GM12878 (cell line): ENCODE measurements at regions of chr3 and their contacts with region 1.

Region 1: DNA sequence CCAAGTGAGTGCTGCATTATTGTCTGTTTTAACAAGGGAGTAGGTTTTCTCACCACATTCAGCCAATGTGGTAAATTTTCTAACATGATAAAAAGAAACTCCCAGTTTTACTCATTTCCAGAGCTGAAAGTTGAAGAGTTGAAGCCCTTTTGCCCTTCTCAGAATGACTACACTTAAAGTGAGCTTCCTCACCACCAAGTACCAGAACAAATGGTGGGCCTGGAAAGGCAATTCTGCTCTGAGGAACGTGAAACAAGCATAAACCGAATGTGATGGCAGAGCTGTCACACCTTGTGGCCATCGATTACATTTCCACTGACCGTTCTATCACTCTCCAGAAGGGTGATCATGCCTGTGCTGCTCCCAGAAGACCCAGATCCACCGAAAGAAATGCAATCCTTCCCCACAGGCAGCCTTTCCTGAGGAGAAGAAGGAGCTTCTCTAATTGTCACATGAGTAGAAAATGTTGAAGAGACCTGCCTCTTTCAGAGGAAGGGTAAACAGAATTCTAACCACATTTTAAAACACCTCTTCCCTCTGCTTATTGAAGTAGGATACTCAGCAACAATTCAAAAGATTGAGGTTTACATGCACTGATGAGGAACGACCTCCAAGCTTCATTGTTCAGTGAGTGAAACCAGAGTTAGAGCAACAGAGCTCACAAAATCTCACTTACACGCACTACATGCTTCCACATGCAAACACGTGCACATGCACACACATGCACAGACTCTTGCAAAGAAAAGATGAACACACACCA is 21.4 kb upstream of the CCR9 start:
- DNase-seq: peak; percentile 71
- ATAC-seq: peak; percentile 84
- H3K4me3 ChIP-seq: no peak overlapping the region
- H3K27ac ChIP-seq: peak overlapping the region; percentile 90
- H3K4me1 ChIP-seq: peaks cover 71% of the 10 kb centered on the region
- H3K27me3 ChIP-seq: no peaks in the 10 kb centered on the region; a peak in 2 of 4 replicates
- CTCF ChIP-seq: no peak
- EP300 ChIP-seq: peak; percentile 99
- POLR2A ChIP-seq: no peak; the same call in 1 of the 2 replicates
- RAD21 ChIP-seq: peak; percentile 35

Region 2: DNA sequence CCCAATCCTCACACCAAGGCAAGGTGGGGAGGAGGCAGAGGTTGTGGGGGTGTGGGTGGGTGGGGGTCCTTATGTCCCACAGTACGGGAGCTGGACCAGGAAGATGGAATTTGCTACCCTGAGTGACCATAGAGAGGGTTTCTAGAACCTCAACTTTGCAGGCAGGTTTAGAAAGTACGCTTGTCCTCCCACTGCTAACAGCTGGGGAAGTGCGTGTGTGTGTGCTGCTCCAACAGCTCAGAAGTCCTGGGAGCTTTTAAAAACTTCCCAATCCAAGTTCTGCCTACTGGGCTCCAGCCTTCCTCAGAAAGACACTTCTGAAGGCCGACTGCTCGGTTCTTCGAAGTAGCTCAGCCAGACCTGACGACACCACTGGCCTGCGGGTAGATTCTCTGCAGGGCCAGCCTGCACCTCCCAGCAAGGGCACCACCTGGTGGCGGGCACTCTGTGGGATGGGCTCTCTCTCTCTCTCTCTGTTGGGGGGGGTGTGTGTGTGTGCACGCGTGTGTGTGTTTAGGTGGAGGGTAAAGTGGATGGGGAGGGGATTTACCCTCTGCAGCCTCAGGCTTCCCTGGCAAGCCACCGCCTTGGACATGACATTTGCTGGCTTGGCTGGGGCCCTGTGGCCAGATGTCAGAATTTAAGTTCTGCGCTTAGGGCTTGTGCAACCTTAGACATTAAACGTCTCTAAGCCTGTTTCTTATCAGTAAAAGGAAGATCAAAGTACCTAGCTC is 654.5 kb before region 1 on chr3:
- CTCF ChIA-PET with region 1: no interaction called
- POLR2A ChIA-PET with region 1: no interaction called
- RAD21 ChIA-PET with region 1: no interaction called
- SMC1A ChIA-PET with region 1: no interaction called
- in situ Hi-C with region 1: no loop called
- intact Hi-C with region 1: no loop called
- DNase-seq: no peak
- ATAC-seq: peak; percentile 98
- H3K4me3 ChIP-seq: no peak overlapping the region
- H3K27ac ChIP-seq: no peak overlapping the region
- H3K4me1 ChIP-seq: no peaks in the 10 kb centered on the region
- H3K27me3 ChIP-seq: peaks cover 2 to 3% of the 10 kb centered on the region in 2 experiments; a peak in 3 of 4 replicates
- CTCF ChIP-seq: peak; percentile 60 to 75 (median 70); a peak in 5 of 6 replicates
- EP300 ChIP-seq: no peak
- POLR2A ChIP-seq: no peak
- RAD21 ChIP-seq: peak; percentile 44

Region 3: DNA sequence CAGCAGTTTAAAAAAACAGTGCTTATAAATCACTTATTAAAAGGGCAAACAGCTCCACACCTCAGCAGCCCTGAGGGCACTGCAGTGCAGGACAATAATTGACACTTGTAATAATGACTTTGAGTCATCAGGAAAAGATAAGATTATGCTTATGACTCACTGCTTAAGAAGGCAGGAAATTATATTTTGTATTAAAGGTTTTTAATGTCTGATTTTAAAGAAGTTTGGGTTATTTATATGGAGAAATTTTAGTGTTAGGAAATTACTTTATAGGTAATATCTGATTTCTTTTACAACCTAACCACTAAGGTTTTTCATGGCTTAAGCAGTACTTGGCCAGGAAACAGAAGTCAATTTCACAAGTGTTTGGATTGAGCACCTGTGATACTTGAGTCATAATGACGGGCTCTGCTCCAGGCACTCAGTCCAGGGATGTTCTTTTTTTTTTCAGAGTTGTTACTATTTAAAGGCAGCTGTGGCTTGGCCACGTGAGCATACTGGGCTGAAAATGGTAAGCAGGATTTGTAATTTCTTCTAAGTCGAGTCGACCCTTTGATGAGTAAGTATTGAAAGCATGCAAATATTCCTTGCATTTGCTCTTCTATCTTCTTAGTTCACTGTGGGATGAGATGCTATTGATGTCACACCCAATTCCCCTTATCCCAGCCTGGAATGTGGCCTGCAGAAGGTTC is 47.0 kb before region 1 on chr3:
- CTCF ChIA-PET with region 1: no interaction called
- POLR2A ChIA-PET with region 1: no interaction called
- RAD21 ChIA-PET with region 1: no interaction called
- SMC1A ChIA-PET with region 1: no interaction called
- in situ Hi-C with region 1: no loop called
- intact Hi-C with region 1: no loop called
- DNase-seq: no peak
- ATAC-seq: peak; percentile 30; the same call in 2 of the 3 replicates
- H3K4me3 ChIP-seq: no peak overlapping the region
- H3K27ac ChIP-seq: no peak overlapping the region
- H3K4me1 ChIP-seq: no peaks in the 10 kb centered on the region
- H3K27me3 ChIP-seq: no peaks in the 10 kb centered on the region
- CTCF ChIP-seq: no peak
- EP300 ChIP-seq: no peak
- POLR2A ChIP-seq: no peak
- RAD21 ChIP-seq: no peak

Region 4: DNA sequence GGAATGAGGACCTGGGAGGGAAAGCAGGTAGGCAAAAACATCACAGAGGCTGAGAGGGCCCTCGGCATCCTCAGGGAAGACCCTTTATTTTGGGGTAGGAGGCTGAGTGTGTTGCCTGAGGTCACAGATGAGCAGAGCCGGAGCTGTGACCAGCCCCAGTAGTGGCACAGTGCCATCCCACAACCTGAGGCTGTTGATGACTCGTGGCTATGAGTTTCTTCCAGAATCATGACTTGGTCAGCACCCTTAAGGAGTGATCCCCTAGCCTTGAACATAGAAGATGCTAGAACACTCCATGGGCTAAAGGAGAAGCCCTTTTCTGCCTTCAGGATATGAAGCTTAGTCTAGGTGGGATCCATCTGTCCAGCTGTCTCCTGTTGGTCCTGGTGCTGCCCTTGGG is 58.8 kb after region 1 on chr3:
- CTCF ChIA-PET with region 1: interaction called, 8 read pairs
- POLR2A ChIA-PET with region 1: interaction called, 6 read pairs
- RAD21 ChIA-PET with region 1: interaction called, 16 read pairs
- SMC1A ChIA-PET with region 1: interaction called, 9 read pairs
- in situ Hi-C with region 1: no loop called
- intact Hi-C with region 1: no loop called
- DNase-seq: no peak
- ATAC-seq: no peak
- H3K4me3 ChIP-seq: no peak overlapping the region
- H3K27ac ChIP-seq: no peak overlapping the region
- H3K4me1 ChIP-seq: no peaks in the 10 kb centered on the region; the same call in 1 of the 2 replicates
- H3K27me3 ChIP-seq: no peaks in the 10 kb centered on the region
- CTCF ChIP-seq: no peak
- EP300 ChIP-seq: no peak
- POLR2A ChIP-seq: no peak
- RAD21 ChIP-seq: no peak

Region 5: GRCh38 chr3:46006238-46007032 is 141.5 kb after region 1 on chr3:
- CTCF ChIA-PET with region 1: no interaction called
- POLR2A ChIA-PET with region 1: no interaction called
- RAD21 ChIA-PET with region 1: no interaction called
- SMC1A ChIA-PET with region 1: no interaction called
- in situ Hi-C with region 1: no loop called
- intact Hi-C with region 1: no loop called
- DNase-seq: no peak
- ATAC-seq: no peak
- H3K4me3 ChIP-seq: no peak overlapping the region
- H3K27ac ChIP-seq: no peak overlapping the region
- H3K4me1 ChIP-seq: peaks cover 3% of the 10 kb centered on the region
- H3K27me3 ChIP-seq: no peaks in the 10 kb centered on the region
- CTCF ChIP-seq: no peak
- EP300 ChIP-seq: no peak
- POLR2A ChIP-seq: no peak
- RAD21 ChIP-seq: no peak